ENCODE measurements at regions of chr16 and their contacts with region 1.

Region 1: DNA sequence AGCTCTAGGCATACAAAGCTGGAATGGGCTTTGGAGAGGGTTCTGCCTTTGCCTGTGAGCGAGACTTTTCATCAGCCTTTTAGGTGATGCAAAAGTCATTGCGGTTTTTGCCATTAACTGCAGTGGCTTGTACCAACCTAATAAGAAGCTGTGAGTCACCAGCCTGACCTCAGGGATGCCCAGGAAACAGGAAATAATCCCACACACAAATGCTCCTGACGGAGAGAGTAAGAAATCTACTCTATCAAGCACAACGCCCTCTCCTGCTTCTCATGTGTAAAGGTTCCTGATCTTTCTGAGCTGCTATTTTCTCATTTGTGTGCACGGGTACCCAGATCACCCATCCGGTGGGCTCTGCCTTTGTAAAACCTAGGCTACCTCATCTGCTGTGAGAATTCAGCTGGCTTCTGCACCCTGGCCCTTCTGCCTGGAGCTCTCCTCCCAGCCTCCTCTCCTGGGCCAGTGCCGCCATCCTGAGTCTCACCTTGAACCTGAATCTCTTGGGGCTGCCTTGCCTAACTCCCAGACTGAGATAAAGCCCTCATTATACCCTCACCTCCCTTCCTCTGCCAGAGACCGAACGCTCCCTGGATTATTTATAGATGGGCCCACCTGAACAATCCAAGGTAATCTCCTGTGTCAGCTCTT is 299.7 kb downstream of the C16orf95 start:
- DNase-seq: peak; percentile 93
- H3K4me3 Mint-ChIP-seq: no peak overlapping the region
- H3K27ac Mint-ChIP-seq: no peak overlapping the region
- H3K4me1 Mint-ChIP-seq: peaks cover 7% of the 10 kb centered on the region
- H3K27me3 Mint-ChIP-seq: peaks cover 18% of the 10 kb centered on the region
- CTCF ChIP-seq: peak; percentile 41

Region 2: GRCh38 chr16:86761111-86762031 is 256.1 kb before region 1 on chr16:
- CTCF ChIA-PET with region 1: interaction called, 4 read pairs
- POLR2A ChIA-PET with region 1: no interaction called
- intact Hi-C with region 1: loop called (anchors 2 kb)
- DNase-seq: peak; percentile 83
- H3K4me3 Mint-ChIP-seq: peak overlapping the region; percentile 60
- H3K27ac Mint-ChIP-seq: no peak overlapping the region
- H3K4me1 Mint-ChIP-seq: peaks cover 14% of the 10 kb centered on the region
- H3K27me3 Mint-ChIP-seq: no peaks in the 10 kb centered on the region
- CTCF ChIP-seq: peak; percentile 86

Region 3: DNA sequence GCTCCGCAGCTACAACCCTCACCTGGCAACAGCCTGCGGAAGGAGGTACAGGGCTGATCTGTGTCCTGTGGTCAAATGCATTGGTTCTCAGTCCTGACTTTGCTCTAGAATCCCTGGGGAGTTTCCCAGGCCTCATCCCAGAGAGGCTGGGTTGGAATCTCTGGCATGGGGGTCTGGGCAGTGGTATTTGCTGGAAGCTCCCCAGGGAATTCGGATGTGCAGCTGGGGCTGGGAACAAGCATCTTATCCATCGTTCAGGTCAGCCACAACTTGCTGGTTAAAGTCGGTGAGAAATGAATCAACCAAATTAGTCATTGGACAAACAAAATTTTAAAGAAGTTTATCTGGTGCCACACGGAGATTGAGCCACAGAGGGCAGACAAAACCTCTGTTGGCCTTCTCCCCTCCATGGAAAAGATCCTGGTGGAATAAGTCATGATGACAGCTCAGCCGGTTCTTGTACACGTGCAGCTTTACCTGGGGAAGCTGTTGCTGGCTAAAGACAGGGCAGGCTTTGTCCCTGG is 208.0 kb before region 1 on chr16:
- CTCF ChIA-PET with region 1: no interaction called
- POLR2A ChIA-PET with region 1: no interaction called
- intact Hi-C with region 1: loop called (anchors 1 kb)
- DNase-seq: peak; percentile 75
- H3K4me3 Mint-ChIP-seq: no peak overlapping the region
- H3K27ac Mint-ChIP-seq: no peak overlapping the region
- H3K4me1 Mint-ChIP-seq: peaks cover 9% of the 10 kb centered on the region
- H3K27me3 Mint-ChIP-seq: no peaks in the 10 kb centered on the region
- CTCF ChIP-seq: peak; percentile 27

Region 4: GRCh38 chr16:86823895-86824671 is 193.4 kb before region 1 on chr16:
- CTCF ChIA-PET with region 1: no interaction called
- POLR2A ChIA-PET with region 1: no interaction called
- intact Hi-C with region 1: loop called (anchors 2 kb)
- DNase-seq: peak; percentile 92
- H3K4me3 Mint-ChIP-seq: peak overlapping the region; percentile 57
- H3K27ac Mint-ChIP-seq: peak overlapping the region; percentile 85
- H3K4me1 Mint-ChIP-seq: peaks cover 42% of the 10 kb centered on the region
- H3K27me3 Mint-ChIP-seq: no peaks in the 10 kb centered on the region
- CTCF ChIP-seq: no peak

Region 5: GRCh38 chr16:86888223-86889044 is 129.1 kb before region 1 on chr16:
- CTCF ChIA-PET with region 1: no interaction called
- POLR2A ChIA-PET with region 1: no interaction called
- intact Hi-C with region 1: no loop called
- DNase-seq: peak; percentile 11
- H3K4me3 Mint-ChIP-seq: no peak overlapping the region
- H3K27ac Mint-ChIP-seq: no peak overlapping the region
- H3K4me1 Mint-ChIP-seq: peaks cover 19% of the 10 kb centered on the region
- H3K27me3 Mint-ChIP-seq: peaks cover 15% of the 10 kb centered on the region
- CTCF ChIP-seq: no peak

Region 6: DNA sequence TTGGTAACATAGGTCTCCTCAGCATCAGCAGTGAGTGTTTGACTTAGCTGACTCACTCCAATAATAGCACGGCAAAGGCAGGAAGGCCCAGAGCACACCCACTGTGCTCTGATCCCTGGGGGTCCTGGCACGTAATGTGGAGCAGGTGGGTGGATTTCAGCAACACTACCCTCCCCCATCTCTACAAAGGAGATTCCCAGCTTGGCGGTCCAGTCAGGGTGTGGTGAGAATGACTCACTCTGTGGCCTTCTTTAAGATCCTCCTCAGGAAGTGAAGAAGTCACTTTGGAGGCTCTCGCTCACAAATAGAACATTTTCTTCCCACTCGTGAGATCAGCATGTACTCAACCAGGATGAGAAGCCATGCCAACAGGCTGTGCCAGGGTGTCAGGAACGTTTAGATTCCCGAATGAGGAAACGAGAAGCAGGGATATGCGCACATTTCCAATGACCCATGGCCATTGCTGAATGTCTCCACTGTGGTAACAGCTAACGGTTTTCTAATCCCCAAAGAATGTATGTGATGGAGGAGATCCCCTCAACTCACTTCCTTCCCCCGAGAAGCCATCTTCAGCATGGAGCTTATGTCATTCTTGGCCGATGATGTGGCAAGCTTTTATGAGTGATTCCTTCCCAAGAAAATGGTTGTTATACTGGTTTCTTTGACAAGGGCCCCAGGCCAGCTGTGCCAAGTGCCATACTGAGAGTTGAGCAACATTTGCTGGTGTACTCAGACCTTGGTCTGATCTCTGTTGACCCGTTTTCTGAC is 65.5 kb before region 1 on chr16:
- CTCF ChIA-PET with region 1: no interaction called
- POLR2A ChIA-PET with region 1: no interaction called
- intact Hi-C with region 1: no loop called
- DNase-seq: peak; percentile 96
- H3K4me3 Mint-ChIP-seq: peak overlapping the region; percentile 28
- H3K27ac Mint-ChIP-seq: no peak overlapping the region
- H3K4me1 Mint-ChIP-seq: peaks cover 12% of the 10 kb centered on the region
- H3K27me3 Mint-ChIP-seq: no peaks in the 10 kb centered on the region
- CTCF ChIP-seq: no peak

Region 7: DNA sequence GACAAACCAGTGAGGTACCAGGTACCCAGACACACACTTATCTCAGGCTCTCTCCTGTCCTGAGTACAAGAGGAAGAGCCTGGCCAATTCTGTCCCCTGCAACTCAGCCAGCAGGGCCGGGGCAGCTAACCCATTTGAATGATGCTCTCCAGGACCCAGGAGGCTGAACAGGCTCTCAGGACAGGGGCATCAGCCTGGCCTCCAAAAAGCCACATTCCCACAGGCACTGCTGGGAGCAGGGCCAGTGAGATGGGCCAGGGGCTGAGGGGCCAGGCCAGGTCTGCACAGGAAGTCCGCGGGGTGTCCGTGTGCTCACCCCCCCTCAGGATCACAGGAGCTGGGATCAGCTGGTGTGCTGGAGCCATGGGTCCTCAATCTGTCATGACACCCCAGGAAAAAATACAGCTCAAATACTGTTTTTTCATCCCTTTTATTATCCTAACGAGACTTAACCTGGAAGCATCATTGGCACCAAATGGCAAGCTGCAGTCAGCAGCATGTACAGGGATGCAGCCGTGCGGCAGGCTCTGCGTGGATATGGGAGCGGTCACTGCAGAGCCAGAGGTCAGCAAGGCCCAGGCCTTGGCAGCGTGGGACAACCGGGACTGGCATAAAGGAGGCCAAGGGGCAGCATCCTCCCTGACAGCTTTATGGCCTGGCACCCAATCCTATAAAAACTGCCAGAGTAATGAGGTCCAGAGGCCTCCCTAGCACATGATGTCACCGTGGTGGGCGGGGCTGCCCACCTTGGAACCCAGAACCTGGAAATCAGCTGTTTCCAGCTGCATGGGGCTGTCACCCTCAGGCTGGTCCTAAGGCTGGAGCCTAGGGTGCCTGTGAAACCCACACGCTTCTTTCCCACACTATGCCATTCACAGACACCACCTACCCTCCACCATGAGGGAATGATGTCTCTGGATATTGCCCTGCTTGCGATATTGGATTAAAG is 23.0 kb after region 1 on chr16:
- CTCF ChIA-PET with region 1: no interaction called
- POLR2A ChIA-PET with region 1: no interaction called
- intact Hi-C with region 1: no loop called
- DNase-seq: no peak
- H3K4me3 Mint-ChIP-seq: no peak overlapping the region
- H3K27ac Mint-ChIP-seq: no peak overlapping the region
- H3K4me1 Mint-ChIP-seq: no peaks in the 10 kb centered on the region
- H3K27me3 Mint-ChIP-seq: peaks cover 10% of the 10 kb centered on the region
- CTCF ChIP-seq: no peak

Measured in MCF 10A (cell line).